ENCODE measurements at regions of chr6 and their contacts with region 1.

Region 1: DNA sequence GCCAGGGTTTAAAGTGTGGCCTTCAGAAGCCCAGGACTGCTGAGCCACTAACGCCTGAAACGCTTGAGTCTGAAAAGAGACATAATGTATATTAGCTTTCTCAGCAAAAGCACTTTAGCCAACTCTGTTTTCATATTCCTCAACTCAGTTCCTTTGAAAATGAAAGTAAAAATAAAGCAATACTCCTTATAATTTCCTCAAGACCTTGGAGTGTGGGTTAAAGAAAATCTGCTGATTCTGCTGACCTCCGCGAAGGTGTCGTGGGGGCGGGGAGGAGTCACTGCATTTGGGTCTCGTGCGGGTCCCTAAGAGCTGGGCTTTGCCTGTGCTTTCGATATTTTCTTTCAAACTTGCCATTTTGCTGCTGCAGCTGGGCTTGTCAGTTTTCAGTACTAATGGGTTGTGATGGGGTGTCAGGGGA is 142.2 kb upstream of the ARID1B start:
- DNase-seq: no peak
- ATAC-seq: no peak
- H3K4me3 ChIP-seq: no peak overlapping the region
- H3K4me3 Mint-ChIP-seq: peak overlapping the region; percentile 25 to 49 (median 38)
- H3K27ac ChIP-seq: no peak overlapping the region
- H3K27ac Mint-ChIP-seq: peak overlapping the region; percentile 24 to 45
- H3K4me1 ChIP-seq: peaks cover 6 to 19% of the 10 kb centered on the region in 2 experiments
- H3K4me1 Mint-ChIP-seq: peaks cover 23 to 30% (median 29%) of the 10 kb centered on the region in 3 donors
- H3K27me3 ChIP-seq: peaks cover 0 to 6% of the 10 kb centered on the region in 2 experiments
- H3K27me3 Mint-ChIP-seq: peaks cover 0 to 2% of the 10 kb centered on the region in 2 donors

Region 2: DNA sequence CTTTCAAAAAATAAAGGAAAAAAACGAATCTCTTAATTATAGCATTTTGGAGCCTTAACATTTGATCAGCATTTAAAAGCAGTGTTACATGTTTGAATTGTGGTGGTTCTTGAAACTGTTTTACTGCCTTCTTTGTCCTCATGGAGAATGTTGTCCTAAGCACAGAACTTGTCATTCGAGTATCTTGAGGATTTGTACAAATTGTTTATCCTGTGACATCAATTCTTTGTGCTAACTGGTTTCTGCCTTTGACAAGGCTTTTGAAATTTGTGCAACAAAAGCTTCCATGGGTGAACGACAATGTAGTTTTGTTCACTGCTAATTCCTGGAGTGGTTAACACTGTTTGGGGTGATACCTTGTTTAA is 1770.9 kb before region 1 on chr6:
- CTCF ChIA-PET with region 1: no interaction called
- POLR2A ChIA-PET with region 1: no interaction called
- DNase-seq: no peak
- ATAC-seq: no peak
- H3K4me3 ChIP-seq: no peak overlapping the region
- H3K4me3 Mint-ChIP-seq: no peak overlapping the region
- H3K27ac ChIP-seq: no peak overlapping the region
- H3K27ac Mint-ChIP-seq: no peak overlapping the region
- H3K4me1 ChIP-seq: peaks cover 0 to 2% of the 10 kb centered on the region in 2 experiments
- H3K4me1 Mint-ChIP-seq: peaks cover 0 to 15% (median 8%) of the 10 kb centered on the region in 3 donors
- H3K27me3 ChIP-seq: no peaks in the 10 kb centered on the region
- H3K27me3 Mint-ChIP-seq: no peaks in the 10 kb centered on the region

Region 3: DNA sequence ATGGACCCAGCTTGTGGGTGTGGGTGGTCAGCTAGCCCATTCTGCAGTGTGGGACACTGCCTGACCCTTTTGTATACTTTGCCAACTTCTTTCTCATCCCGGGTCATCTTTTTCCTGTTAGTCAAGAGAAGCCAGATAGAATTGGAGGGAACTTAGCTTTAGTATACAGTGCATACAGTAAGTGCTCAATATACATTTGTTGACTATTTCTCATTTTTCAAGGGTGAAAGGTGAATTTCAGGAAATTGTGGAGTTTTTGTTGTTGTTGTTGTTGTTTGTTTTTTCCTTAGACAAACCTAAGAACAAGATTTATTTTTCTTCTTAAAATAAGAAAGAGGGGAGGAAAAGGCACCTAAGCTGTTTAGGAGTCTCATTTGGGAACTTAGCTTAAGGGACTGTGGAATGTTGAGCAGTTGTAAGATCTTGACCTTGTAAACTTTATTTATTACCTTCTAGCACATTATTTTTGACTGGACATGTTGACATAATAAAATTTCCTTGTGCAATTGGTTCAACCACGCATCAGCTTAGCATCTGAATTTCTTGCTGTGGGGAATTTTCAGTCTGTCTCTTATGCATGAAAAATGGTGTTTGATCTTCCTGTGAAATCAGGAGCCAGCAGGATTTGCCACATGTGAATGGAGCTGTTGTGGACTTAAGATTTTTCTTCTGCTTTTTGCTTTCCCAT is 255.8 kb after region 1 on chr6:
- CTCF ChIA-PET with region 1: no interaction called
- POLR2A ChIA-PET with region 1: no interaction called
- DNase-seq: no peak
- ATAC-seq: no peak
- H3K4me3 ChIP-seq: no peak overlapping the region
- H3K4me3 Mint-ChIP-seq: no peak overlapping the region
- H3K27ac ChIP-seq: no peak overlapping the region
- H3K27ac Mint-ChIP-seq: no peak overlapping the region
- H3K4me1 ChIP-seq: peaks cover 0 to 5% of the 10 kb centered on the region in 2 experiments
- H3K4me1 Mint-ChIP-seq: peaks cover 71 to 78% (median 74%) of the 10 kb centered on the region in 3 donors
- H3K27me3 ChIP-seq: no peaks in the 10 kb centered on the region
- H3K27me3 Mint-ChIP-seq: no peaks in the 10 kb centered on the region

Region 4: DNA sequence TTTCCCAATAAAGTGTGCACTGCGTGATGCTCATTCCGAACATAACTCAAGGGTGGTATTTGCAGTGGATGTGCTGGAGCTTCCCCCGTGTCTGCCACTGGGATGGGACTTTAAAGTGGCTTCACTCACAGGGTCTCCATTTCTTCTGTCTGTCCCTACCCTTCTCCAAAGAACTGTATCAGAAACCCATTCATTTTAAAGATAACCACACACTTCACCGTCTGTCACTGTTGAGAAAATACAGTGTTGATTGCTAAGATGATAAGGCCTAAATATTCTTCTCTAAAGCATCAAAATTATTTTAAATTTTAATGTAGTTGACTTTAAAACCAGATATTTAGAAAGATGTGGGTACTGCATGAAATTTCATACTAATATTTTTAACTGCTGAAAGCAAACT is 527.0 kb after region 1 on chr6:
- CTCF ChIA-PET with region 1: interaction called in 1 of 2 experiments, 15 read pairs
- POLR2A ChIA-PET with region 1: no interaction called
- DNase-seq: no peak
- ATAC-seq: no peak
- H3K4me3 ChIP-seq: no peak overlapping the region
- H3K4me3 Mint-ChIP-seq: no peak overlapping the region
- H3K27ac ChIP-seq: no peak overlapping the region
- H3K27ac Mint-ChIP-seq: no peak overlapping the region
- H3K4me1 ChIP-seq: no peaks in the 10 kb centered on the region
- H3K4me1 Mint-ChIP-seq: peaks cover 0 to 5% (median 1%) of the 10 kb centered on the region in 3 donors
- H3K27me3 ChIP-seq: no peaks in the 10 kb centered on the region
- H3K27me3 Mint-ChIP-seq: no peaks in the 10 kb centered on the region